Heart left ventricle (tissue), 16 donors: ENCODE measurements at regions of chr7 and their contacts with region 1.

Region 1: GRCh38 chr7:2214636-2215035 is 18.1 kb downstream of the MAD1L1 start:
- DNase-seq: peak in 2 of 5 donors; percentile 27 to 47
- ATAC-seq: peak in 2 of 4 donors; percentile 6 to 30
- H3K4me3 ChIP-seq: no peak overlapping the region
- H3K27ac ChIP-seq: peak overlapping the region in 10 of 12 donors; percentile 48 to 86 (median 64)
- H3K4me1 ChIP-seq: peaks cover 0 to 24% (median 7%) of the 10 kb centered on the region in 12 donors
- H3K27me3 ChIP-seq: no peaks in the 10 kb centered on the region
- CTCF ChIP-seq: no peak
- POLR2A ChIP-seq: no peak

Region 2: GRCh38 chr7:1812509-1813393 is 401.9 kb before region 1 on chr7:
- intact Hi-C with region 1: loop called in 3 of 10 experiments (anchors 5 kb)
- DNase-seq: no peak
- ATAC-seq: peak in 1 of 4 donors; percentile 53
- H3K4me3 ChIP-seq: no peak overlapping the region
- H3K27ac ChIP-seq: no peak overlapping the region
- H3K4me1 ChIP-seq: peaks cover 0 to 17% (median 5%) of the 10 kb centered on the region in 12 donors
- H3K27me3 ChIP-seq: no peaks in the 10 kb centered on the region
- CTCF ChIP-seq: peak in 10 of 12 donors; percentile 9 to 62 (median 42)
- POLR2A ChIP-seq: no peak

Region 3: GRCh38 chr7:2608921-2609411 is 394.3 kb after region 1 on chr7:
- intact Hi-C with region 1: no loop called
- DNase-seq: no peak
- ATAC-seq: peak in 1 of 4 donors; percentile 3
- H3K4me3 ChIP-seq: peak overlapping the region in 1 of 12 donors; percentile 15
- H3K27ac ChIP-seq: peak overlapping the region in 4 of 12 donors; percentile 3 to 91 (median 58)
- H3K4me1 ChIP-seq: peaks cover 3 to 61% (median 39%) of the 10 kb centered on the region in 12 donors
- H3K27me3 ChIP-seq: no peaks in the 10 kb centered on the region
- CTCF ChIP-seq: peak in 6 of 12 donors; percentile 16 to 29 (median 20)
- POLR2A ChIP-seq: no peak